ENCODE measurements at regions of chr7 and their contacts with region 1.

Region 1: DNA sequence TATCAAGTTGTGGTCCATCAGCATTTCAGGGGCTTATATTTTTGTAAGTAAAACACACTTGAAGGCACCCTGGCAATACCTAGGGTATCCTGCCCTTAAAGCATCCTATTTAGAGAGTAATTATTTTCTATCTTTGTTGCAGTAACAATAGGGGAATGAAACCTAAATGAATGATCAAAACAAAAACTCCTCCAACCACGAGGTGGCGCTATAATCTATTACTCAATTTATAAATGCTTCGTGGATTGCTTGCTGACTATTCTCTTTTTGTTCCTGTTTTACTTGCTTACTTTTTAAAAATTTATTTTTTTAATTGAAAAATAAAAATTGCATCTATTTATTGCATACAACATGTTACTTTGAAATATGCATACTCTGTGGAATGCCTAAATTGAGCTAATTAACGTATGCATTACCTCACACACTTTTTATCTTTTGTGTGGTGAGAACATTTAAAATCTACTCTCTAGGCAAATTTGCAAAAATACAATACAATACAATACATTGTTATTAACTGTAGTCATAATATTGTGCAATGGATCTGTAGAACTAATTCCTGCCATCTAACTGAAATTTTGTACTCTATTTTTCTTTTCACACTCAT is 147.7 kb upstream of the BMPER start:
- DNase-seq: peak; percentile 47
- ATAC-seq: no peak
- H3K4me3 ChIP-seq: no peak overlapping the region
- H3K27ac ChIP-seq: no peak overlapping the region
- H3K4me1 ChIP-seq: peaks cover 9% of the 10 kb centered on the region
- H3K27me3 ChIP-seq: no peaks in the 10 kb centered on the region
- CTCF ChIP-seq: peak; percentile 58
- POLR2A ChIP-seq: no peak
- RAD21 ChIP-seq: peak; percentile 64

Region 2: GRCh38 chr7:33185786-33186185 is 571.9 kb before region 1 on chr7:
- CTCF ChIA-PET with region 1: no interaction called
- POLR2A ChIA-PET with region 1: no interaction called
- dilution Hi-C with region 1: no loop called
- in situ Hi-C with region 1: no loop called
- intact Hi-C with region 1: loop called (anchors 10 kb)
- DNase-seq: peak; percentile 68
- ATAC-seq: peak; percentile 97
- H3K4me3 ChIP-seq: no peak overlapping the region
- H3K27ac ChIP-seq: no peak overlapping the region
- H3K4me1 ChIP-seq: no peaks in the 10 kb centered on the region
- H3K27me3 ChIP-seq: no peaks in the 10 kb centered on the region
- CTCF ChIP-seq: peak; percentile 80
- POLR2A ChIP-seq: no peak
- RAD21 ChIP-seq: peak; percentile 85

Region 3: GRCh38 chr7:33459340-33459751 is 298.3 kb before region 1 on chr7:
- CTCF ChIA-PET with region 1: no interaction called
- POLR2A ChIA-PET with region 1: no interaction called
- dilution Hi-C with region 1: no loop called
- in situ Hi-C with region 1: no loop called
- intact Hi-C with region 1: loop called (anchors 10 kb)
- DNase-seq: peak; percentile 66
- ATAC-seq: peak; percentile 99
- H3K4me3 ChIP-seq: no peak overlapping the region
- H3K27ac ChIP-seq: no peak overlapping the region
- H3K4me1 ChIP-seq: no peaks in the 10 kb centered on the region
- H3K27me3 ChIP-seq: no peaks in the 10 kb centered on the region
- CTCF ChIP-seq: peak; percentile 54
- POLR2A ChIP-seq: no peak
- RAD21 ChIP-seq: peak; percentile 64

Region 4: DNA sequence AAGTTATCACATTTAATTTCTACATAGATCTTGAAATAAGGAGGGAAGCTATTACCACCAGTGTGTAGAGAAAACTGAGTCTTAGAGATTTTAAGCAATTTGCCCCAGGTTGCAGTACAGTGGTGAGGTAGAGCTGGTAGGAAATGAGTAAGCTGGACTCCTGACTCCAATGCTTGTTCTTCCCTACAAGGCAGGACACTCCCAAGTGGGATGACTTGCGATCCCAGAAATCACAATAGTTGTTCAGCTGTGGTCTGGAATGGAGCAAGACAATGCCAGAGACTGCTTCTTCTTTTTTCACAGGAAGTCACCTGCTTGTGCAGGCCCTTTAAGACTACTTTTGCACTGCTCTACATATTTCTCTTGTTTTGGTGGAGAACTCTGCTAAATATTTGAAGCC is 179.5 kb before region 1 on chr7:
- CTCF ChIA-PET with region 1: no interaction called
- POLR2A ChIA-PET with region 1: no interaction called
- dilution Hi-C with region 1: no loop called
- in situ Hi-C with region 1: no loop called
- intact Hi-C with region 1: no loop called
- DNase-seq: peak; percentile 28
- ATAC-seq: no peak
- H3K4me3 ChIP-seq: no peak overlapping the region
- H3K27ac ChIP-seq: no peak overlapping the region
- H3K4me1 ChIP-seq: peaks cover 16% of the 10 kb centered on the region
- H3K27me3 ChIP-seq: no peaks in the 10 kb centered on the region
- CTCF ChIP-seq: no peak
- POLR2A ChIP-seq: no peak
- RAD21 ChIP-seq: no peak